Breast epithelium (tissue), 4 donors: ENCODE measurements at regions of chr13 and their contacts with region 1.

Region 1: GRCh38 chr13:55777612-55778011 is 1363.1 kb upstream of the PRR20A start:
- DNase-seq: no peak
- H3K4me3 ChIP-seq: no peak overlapping the region
- H3K27ac ChIP-seq: no peak overlapping the region
- H3K4me1 ChIP-seq: no peaks in the 10 kb centered on the region
- H3K27me3 ChIP-seq: no peaks in the 10 kb centered on the region
- CTCF ChIP-seq: no peak
- POLR2A ChIP-seq: no peak

Region 2: DNA sequence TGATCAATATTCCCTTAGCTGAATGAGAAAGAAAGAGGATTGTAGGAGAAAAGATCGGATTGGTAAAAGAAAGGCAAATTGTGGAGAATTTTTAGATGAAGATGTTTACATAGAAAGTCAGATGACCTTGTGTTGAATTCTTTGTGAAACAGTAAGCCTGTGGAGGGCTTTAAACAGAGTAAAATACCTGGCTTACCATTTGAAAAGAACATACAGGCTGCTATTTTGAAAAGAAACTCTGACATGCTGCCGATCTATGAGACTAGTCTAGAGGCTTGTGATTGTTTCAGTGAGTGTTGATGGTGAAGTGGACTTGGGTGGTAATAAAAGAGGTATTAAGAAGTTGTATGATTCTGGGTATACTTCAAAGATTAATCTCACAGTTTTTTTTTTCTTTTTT is 424.2 kb after region 1 on chr13:
- intact Hi-C with region 1: loop called (anchors 5 kb)
- DNase-seq: no peak
- H3K4me3 ChIP-seq: no peak overlapping the region
- H3K27ac ChIP-seq: no peak overlapping the region
- H3K4me1 ChIP-seq: no peaks in the 10 kb centered on the region
- H3K27me3 ChIP-seq: no peaks in the 10 kb centered on the region
- CTCF ChIP-seq: no peak
- POLR2A ChIP-seq: no peak